ENCODE measurements at regions of chr1 and their contacts with region 1.

Region 1: GRCh38 chr1:17648457-17649145 is 106.5 kb upstream of the ACTL8 start:
- DNase-seq: peak; percentile 19
- H3K4me3 ChIP-seq: no peak overlapping the region
- H3K27ac ChIP-seq: no peak overlapping the region
- H3K4me1 ChIP-seq: no peaks in the 10 kb centered on the region
- H3K27me3 ChIP-seq: no peaks in the 10 kb centered on the region
- CTCF ChIP-seq: no peak

Region 2: GRCh38 chr1:17687145-17687544 is 38.5 kb after region 1 on chr1:
- CTCF ChIA-PET with region 1: no interaction called
- dilution Hi-C with region 1: no loop called
- in situ Hi-C with region 1: no loop called
- intact Hi-C with region 1: no loop called
- DNase-seq: no peak
- H3K4me3 ChIP-seq: no peak overlapping the region
- H3K27ac ChIP-seq: no peak overlapping the region
- H3K4me1 ChIP-seq: no peaks in the 10 kb centered on the region
- H3K27me3 ChIP-seq: no peaks in the 10 kb centered on the region
- CTCF ChIP-seq: no peak

Region 3: GRCh38 chr1:17826165-17826488 is 177.5 kb after region 1 on chr1:
- CTCF ChIA-PET with region 1: no interaction called
- dilution Hi-C with region 1: no loop called
- in situ Hi-C with region 1: no loop called
- intact Hi-C with region 1: no loop called
- DNase-seq: no peak
- H3K4me3 ChIP-seq: no peak overlapping the region
- H3K27ac ChIP-seq: no peak overlapping the region
- H3K4me1 ChIP-seq: no peaks in the 10 kb centered on the region
- H3K27me3 ChIP-seq: no peaks in the 10 kb centered on the region
- CTCF ChIP-seq: peak in 1 of 2 donors; percentile 38

Region 4: GRCh38 chr1:17865912-17866739 is 217.5 kb after region 1 on chr1:
- CTCF ChIA-PET with region 1: no interaction called
- dilution Hi-C with region 1: no loop called
- in situ Hi-C with region 1: no loop called
- intact Hi-C with region 1: no loop called
- DNase-seq: peak; percentile 76
- H3K4me3 ChIP-seq: no peak overlapping the region
- H3K27ac ChIP-seq: no peak overlapping the region
- H3K4me1 ChIP-seq: peaks cover 3% of the 10 kb centered on the region
- H3K27me3 ChIP-seq: no peaks in the 10 kb centered on the region
- CTCF ChIP-seq: no peak

Region 5: GRCh38 chr1:18575620-18576019 is 927.0 kb after region 1 on chr1:
- CTCF ChIA-PET with region 1: no interaction called
- dilution Hi-C with region 1: no loop called
- in situ Hi-C with region 1: loop called (anchors 10 kb)
- intact Hi-C with region 1: no loop called
- DNase-seq: no peak
- H3K4me3 ChIP-seq: no peak overlapping the region
- H3K27ac ChIP-seq: no peak overlapping the region
- H3K4me1 ChIP-seq: no peaks in the 10 kb centered on the region
- H3K27me3 ChIP-seq: no peaks in the 10 kb centered on the region
- CTCF ChIP-seq: peak; percentile 66 to 92

Measured in mammary epithelial cell (primary cell).